Aorta (tissue), 5 donors: ENCODE measurements at regions of chr11 and their contacts with region 1.

Region 1: GRCh38 chr11:125874556-125875124 is 12.8 kb upstream of the HYLS1 start:
- DNase-seq: peak in 1 of 2 donors; percentile 59
- ATAC-seq: peak; percentile 78
- H3K4me3 ChIP-seq: no peak overlapping the region
- H3K27ac ChIP-seq: no peak overlapping the region
- H3K4me1 ChIP-seq: no peaks in the 10 kb centered on the region
- H3K27me3 ChIP-seq: no peaks in the 10 kb centered on the region

Region 2: GRCh38 chr11:125429166-125429707 is 445.4 kb before region 1 on chr11:
- intact Hi-C with region 1: loop called in 1 of 2 experiments (anchors 10 kb)
- DNase-seq: peak in 1 of 2 donors; percentile 81
- ATAC-seq: no peak
- H3K4me3 ChIP-seq: no peak overlapping the region
- H3K27ac ChIP-seq: no peak overlapping the region
- H3K4me1 ChIP-seq: no peaks in the 10 kb centered on the region
- H3K27me3 ChIP-seq: no peaks in the 10 kb centered on the region

Region 3: GRCh38 chr11:125724125-125724524 is 150.5 kb before region 1 on chr11:
- intact Hi-C with region 1: loop called in 1 of 2 experiments (anchors 5 kb)
- DNase-seq: no peak
- ATAC-seq: no peak
- H3K4me3 ChIP-seq: no peak overlapping the region
- H3K27ac ChIP-seq: no peak overlapping the region
- H3K4me1 ChIP-seq: no peaks in the 10 kb centered on the region
- H3K27me3 ChIP-seq: no peaks in the 10 kb centered on the region